ENCODE measurements at regions of chr6 and their contacts with region 1.

Region 1: DNA sequence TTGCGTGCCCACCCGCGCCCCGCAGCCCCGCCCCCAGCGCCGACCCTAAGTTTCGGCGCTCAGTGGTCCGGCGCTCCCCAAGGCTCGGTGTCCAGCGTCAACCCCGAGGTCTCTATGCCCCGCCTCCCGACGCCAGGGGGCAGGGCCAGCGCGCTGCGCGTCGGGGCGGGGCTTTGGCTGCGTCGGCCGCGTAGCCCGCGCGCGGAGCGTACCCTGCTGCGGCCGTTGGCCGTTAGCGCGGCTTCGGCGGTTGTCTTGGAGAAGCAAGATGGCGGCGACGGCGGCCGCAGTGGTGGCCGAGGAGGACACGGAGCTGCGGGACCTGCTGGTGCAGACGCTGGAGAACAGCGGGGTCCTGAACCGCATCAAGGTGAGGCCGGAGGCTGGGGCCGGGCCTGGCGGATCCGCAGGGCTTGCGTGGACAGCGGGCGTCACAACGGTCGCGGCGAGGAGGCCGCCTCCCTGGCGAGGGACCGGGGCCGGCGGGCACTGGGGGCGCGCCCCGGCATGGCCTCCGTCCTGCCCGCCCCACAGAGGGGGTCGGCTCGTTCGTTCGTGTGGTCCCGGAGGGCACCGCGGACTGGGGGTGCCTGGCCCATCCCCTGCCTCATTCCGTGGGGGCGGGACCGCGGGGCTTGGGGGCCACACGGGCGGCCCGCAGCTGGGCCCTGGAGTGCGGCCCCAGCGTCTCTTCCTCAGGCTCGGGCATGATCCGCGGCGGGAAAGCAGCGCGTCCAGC is at the start of gene CEP43:
- DNase-seq: peak; percentile 94 to 99
- H3K4me3 ChIP-seq: peak within 1 kb of the TSS; percentile 84 to 100 (median 91)
- H3K27ac ChIP-seq: peak within 1 kb of the TSS; percentile 66 to 84 (median 82)
- H3K4me1 ChIP-seq: peaks cover 16 to 42% (median 34%) of the 10 kb centered on the region in 4 donors
- H3K27me3 ChIP-seq: no peaks in the 10 kb centered on the region
- CTCF ChIP-seq: peak in 3 of 7 experiments; percentile 17 to 51 (median 18)
- EP300 ChIP-seq: no peak
- POLR2A ChIP-seq: no peak
- total RNA-seq, gene CEP43: 11.2 to 99.6 (median 18.7) TPM

Region 2: GRCh38 chr6:166921570-166921969 is 77.7 kb before region 1 on chr6:
- intact Hi-C with region 1: no loop called
- DNase-seq: no peak
- H3K4me3 ChIP-seq: no peak overlapping the region
- H3K27ac ChIP-seq: no peak overlapping the region
- H3K4me1 ChIP-seq: no peaks in the 10 kb centered on the region
- H3K27me3 ChIP-seq: no peaks in the 10 kb centered on the region
- CTCF ChIP-seq: no peak
- EP300 ChIP-seq: no peak
- POLR2A ChIP-seq: no peak

Region 3: GRCh38 chr6:166959906-166960608 is 39.3 kb before region 1 on chr6:
- intact Hi-C with region 1: loop called (anchors 5 kb)
- DNase-seq: no peak
- H3K4me3 ChIP-seq: no peak overlapping the region
- H3K27ac ChIP-seq: peak overlapping the region in 4 of 5 donors; percentile 91 to 97 (median 94)
- H3K4me1 ChIP-seq: peaks cover 28 to 54% (median 40%) of the 10 kb centered on the region in 4 donors
- H3K27me3 ChIP-seq: no peaks in the 10 kb centered on the region
- CTCF ChIP-seq: no peak
- EP300 ChIP-seq: no peak
- POLR2A ChIP-seq: no peak